ENCODE measurements at regions of chr6 and their contacts with region 1.

Region 1: DNA sequence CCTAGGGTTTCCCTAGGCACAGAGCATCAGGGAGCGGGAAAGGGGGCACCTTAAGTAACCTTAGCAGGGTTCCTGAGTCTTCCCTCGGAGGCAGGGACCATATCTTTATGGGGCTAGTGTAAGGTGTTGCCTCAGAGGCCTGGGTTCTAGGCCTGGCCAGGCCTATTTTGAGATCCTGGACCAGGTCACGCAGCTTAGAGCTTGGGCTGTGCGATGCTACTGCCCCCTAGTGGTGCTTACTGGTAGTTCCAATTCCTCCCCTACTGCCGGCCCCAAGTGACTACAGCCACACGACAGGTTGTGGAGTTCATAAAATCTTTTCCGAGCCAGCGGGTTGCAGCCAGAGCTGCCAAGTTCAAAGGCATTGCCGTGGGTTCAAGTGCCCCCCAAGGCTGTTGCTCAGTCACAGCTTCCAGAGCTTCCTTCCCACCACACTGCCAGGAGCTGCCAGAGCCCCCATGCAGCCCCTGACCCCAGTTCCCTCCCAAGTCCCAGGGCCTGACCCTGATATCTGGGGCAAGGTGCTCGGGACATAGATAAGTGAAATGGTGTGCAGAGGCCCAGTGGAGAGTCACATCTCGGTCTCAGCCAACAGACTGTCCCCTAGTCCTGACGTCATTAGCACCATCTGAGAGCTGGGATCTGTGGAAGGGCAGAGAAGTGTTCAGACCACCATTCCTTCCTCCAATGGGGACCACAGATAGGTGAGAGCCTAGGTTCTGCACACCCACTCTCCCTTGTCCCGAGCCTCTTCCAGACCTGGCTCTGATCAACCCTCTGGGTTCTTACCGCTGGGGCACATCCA is 3.3 kb downstream of the LRRC73 start:
- DNase-seq: peak; percentile 62
- H3K4me3 ChIP-seq: no peak overlapping the region
- H3K27ac ChIP-seq: no peak overlapping the region
- H3K4me1 ChIP-seq: peaks cover 12% of the 10 kb centered on the region
- H3K27me3 ChIP-seq: no peaks in the 10 kb centered on the region
- CTCF ChIP-seq: peak; percentile 91 to 92

Region 2: DNA sequence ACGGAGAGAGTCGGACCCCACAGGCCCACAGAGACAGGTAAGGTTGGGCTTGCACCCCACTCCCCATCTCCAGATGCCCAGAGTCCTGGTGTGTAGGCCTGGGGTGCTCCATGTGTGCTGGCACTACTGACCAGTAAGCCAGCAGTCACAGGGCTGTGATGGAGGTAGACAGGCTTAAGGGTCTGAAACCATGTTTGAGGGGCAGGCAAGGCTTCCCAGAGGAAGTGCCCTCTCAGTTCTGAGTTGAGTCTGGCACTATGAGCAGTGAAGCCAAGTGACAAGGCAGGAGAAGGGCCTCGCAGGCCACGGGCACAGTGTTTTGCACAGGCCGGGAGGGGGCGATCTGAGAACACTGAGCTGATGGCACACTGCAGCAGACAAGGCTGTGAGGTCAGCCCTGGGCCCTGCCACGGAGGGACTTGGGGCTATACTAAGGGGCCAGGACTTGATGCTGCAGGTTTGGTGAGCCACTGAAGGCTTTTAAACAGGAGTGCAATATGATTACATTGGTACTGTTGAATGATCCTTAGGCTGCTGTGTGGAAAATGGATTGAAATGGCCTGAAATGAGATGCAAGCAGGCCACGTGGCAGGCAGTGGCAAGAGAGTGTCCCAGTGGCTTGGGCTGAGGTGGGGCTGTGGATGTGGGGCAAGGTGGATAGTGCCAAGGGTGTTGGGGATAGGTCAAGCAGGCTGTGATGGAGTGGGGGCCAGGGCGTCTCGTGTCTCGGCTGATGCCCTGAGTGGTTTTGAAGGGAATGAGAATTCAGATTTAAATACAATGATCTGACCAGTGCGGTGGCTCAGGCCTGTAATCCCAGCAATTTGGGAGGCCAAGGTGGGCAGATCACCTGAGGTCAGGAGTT is 243.3 kb before region 1 on chr6:
- CTCF ChIA-PET with region 1: no interaction called
- dilution Hi-C with region 1: no loop called
- in situ Hi-C with region 1: no loop called
- intact Hi-C with region 1: loop called (anchors 1 kb)
- DNase-seq: peak; percentile 51
- H3K4me3 ChIP-seq: no peak overlapping the region
- H3K27ac ChIP-seq: no peak overlapping the region
- H3K4me1 ChIP-seq: no peaks in the 10 kb centered on the region
- H3K27me3 ChIP-seq: no peaks in the 10 kb centered on the region
- CTCF ChIP-seq: peak; percentile 87 to 91

Region 3: DNA sequence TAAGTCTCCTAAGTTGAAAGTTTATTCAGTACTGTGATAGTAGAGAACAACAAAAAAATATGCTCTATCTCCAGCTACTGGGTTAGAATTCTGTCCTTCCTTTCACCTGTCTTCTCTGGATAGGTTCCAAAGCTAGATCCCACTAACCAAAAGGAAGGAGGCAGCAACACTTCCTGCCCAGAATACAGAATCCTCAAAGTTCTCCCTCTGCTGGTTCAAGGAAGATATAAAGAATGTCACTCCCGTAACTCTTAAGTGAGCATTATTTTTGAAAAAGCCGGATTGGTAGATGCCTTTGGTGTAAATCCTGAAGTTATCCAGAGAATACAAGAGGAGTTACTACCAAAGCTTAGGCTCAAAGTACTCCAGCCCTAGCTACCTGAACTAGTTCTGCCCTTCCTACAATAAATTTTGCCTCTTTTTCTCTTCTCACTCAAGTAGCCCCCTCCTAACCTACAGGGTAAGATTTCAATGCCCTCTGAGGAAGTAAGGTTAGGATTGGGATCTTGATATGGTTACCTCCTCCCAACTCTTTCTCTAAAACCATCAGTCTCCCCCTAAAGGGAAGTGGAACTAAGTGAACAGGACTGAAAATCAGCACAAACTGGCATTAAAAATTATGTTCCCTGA is 172.3 kb before region 1 on chr6:
- CTCF ChIA-PET with region 1: no interaction called
- dilution Hi-C with region 1: no loop called
- in situ Hi-C with region 1: no loop called
- intact Hi-C with region 1: loop called (anchors 1 kb)
- DNase-seq: peak; percentile 47
- H3K4me3 ChIP-seq: no peak overlapping the region
- H3K27ac ChIP-seq: no peak overlapping the region
- H3K4me1 ChIP-seq: no peaks in the 10 kb centered on the region
- H3K27me3 ChIP-seq: no peaks in the 10 kb centered on the region
- CTCF ChIP-seq: peak; percentile 58 to 67

Region 4: GRCh38 chr6:43444036-43444435 is 62.8 kb before region 1 on chr6:
- CTCF ChIA-PET with region 1: no interaction called
- dilution Hi-C with region 1: loop called (anchors 5 kb)
- in situ Hi-C with region 1: no loop called
- intact Hi-C with region 1: no loop called
- DNase-seq: no peak
- H3K4me3 ChIP-seq: no peak overlapping the region
- H3K27ac ChIP-seq: no peak overlapping the region
- H3K4me1 ChIP-seq: no peaks in the 10 kb centered on the region
- H3K27me3 ChIP-seq: no peaks in the 10 kb centered on the region
- CTCF ChIP-seq: no peak

Region 5: DNA sequence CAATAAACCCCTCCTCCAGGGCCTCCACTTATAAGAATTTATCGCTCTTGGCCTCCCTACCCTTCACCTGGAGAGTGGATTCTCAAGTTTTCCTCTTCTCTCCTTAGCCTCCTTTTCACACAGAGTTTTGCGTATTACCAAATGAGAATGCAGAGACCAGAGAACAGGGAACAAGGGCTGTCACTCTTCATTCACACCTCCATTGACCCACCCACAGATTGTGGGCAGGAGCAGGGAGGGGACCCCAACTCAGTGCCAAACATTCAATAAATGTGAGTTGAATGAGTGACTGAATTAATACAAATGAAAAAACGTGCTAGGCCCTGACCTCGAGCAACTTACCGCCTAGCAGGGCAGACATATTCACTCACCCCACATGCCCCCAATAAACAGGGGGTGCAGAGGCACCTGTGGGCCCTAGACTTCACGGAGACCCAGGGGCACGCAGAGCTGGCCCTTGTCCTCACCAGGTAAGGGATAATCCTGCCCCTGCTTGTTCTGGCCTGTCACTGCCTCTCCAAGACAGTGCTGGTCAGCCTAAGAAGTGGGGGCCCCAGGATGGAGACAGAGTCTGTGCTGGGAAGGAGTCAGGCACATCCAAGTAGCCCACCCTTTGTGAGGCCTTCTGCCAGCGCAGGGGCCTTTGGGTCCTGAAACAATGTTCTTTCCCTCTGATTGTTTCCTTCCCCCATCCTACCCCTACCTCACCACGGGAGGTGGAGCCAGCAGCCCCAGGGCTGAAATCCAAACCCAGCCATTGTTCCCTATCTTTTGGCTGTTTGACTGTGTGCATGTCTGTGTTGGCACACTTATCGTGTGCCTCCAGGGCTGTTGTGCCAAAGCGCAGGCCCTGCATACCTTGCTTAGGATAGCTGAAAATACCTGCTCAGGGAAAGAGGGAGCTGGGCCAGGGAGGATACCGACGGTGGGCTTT is 37.9 kb before region 1 on chr6:
- CTCF ChIA-PET with region 1: no interaction called
- dilution Hi-C with region 1: no loop called
- in situ Hi-C with region 1: no loop called
- intact Hi-C with region 1: no loop called
- DNase-seq: no peak
- H3K4me3 ChIP-seq: no peak overlapping the region
- H3K27ac ChIP-seq: no peak overlapping the region
- H3K4me1 ChIP-seq: peaks cover 33% of the 10 kb centered on the region
- H3K27me3 ChIP-seq: no peaks in the 10 kb centered on the region
- CTCF ChIP-seq: no peak

Region 6: GRCh38 chr6:43593938-43594337 is 87.1 kb after region 1 on chr6:
- CTCF ChIA-PET with region 1: no interaction called
- dilution Hi-C with region 1: no loop called
- in situ Hi-C with region 1: no loop called
- intact Hi-C with region 1: no loop called
- DNase-seq: no peak
- H3K4me3 ChIP-seq: no peak overlapping the region
- H3K27ac ChIP-seq: no peak overlapping the region
- H3K4me1 ChIP-seq: no peaks in the 10 kb centered on the region
- H3K27me3 ChIP-seq: no peaks in the 10 kb centered on the region
- CTCF ChIP-seq: no peak